Psoas muscle (tissue), 8 donors: ENCODE measurements at regions of chr17 and their contacts with region 1.

Region 1: DNA sequence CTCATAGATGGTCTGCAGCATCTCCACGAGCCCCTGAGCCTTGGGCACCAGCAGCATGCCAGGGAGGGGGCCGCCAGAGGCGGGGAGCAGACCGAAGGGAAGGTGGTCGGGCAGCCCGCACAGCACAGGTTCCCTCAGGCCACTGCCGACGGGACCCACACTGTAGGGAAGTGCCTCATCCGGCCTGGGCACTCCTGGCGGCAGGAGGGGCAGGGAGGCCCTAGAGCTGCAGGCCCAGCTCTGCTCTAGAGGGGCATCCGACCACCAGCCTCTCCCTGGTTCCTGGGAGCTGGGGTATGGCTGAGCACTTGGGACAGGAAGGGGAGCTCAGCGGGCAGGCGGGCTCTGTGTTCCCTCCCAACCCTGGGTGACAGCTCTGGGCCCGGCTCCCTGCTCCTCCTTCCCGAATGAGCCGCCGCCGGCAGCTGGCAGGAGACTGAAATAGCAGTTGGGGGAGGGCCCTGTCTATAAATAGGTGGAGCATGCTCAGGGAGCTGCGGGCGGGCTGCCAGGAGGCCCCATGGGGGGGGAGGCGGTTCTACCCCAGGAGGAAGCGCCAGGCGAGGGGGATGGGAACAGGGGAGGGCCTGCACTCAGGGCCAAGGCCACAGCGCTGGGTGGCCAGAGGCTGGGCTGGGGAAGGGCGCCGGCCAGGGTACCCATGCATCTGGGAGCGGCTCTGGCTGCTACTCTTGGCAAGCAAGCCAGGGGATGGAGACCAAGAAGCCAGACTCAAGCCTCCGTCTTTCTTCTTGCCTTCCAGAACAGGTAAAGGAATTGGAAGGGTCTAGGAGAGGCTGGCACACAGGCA is 12.4 kb downstream of the HDAC5 start:
- DNase-seq: peak; percentile 98 to 100
- ATAC-seq: peak; percentile 73 to 80 (median 78)
- H3K4me3 ChIP-seq: peak overlapping the region; percentile 72
- H3K27ac ChIP-seq: peak overlapping the region; percentile 96
- H3K4me1 ChIP-seq: peaks cover 98% of the 10 kb centered on the region
- H3K27me3 ChIP-seq: no peaks in the 10 kb centered on the region
- CTCF ChIP-seq: no peak

Region 2: DNA sequence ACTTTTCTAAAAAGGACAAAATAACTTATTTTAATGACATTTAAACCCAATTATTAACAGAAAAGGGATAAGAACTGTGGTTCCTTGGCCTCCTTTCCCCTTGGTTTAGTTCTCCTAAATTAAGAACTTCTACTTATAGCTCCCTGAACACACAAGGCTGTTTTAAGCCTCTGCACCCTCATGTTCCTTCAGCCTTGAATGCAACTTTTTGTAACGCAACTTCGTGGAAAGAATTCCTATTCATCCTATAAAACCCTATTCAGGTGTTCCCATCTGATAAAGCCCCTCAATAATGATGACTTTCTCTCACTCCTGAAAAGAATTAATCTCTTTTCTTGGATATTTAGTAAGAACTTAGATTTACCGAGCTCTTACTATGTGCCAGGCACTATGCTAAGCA is 1729.1 kb before region 1 on chr17:
- intact Hi-C with region 1: loop called in 1 of 2 experiments (anchors 5 kb)
- DNase-seq: no peak
- ATAC-seq: peak in 3 of 4 donors; percentile 59 to 89 (median 81)
- H3K4me3 ChIP-seq: no peak overlapping the region
- H3K27ac ChIP-seq: peak overlapping the region; percentile 66
- H3K4me1 ChIP-seq: peaks cover 68% of the 10 kb centered on the region
- H3K27me3 ChIP-seq: no peaks in the 10 kb centered on the region
- CTCF ChIP-seq: no peak

Region 3: GRCh38 chr17:44014437-44015172 is 96.4 kb before region 1 on chr17 and contains the start of gene TMEM101:
- intact Hi-C with region 1: loop called in 1 of 2 experiments (anchors 10 kb)
- DNase-seq: peak; percentile 91 to 95
- ATAC-seq: peak; percentile 93 to 98 (median 96)
- H3K4me3 ChIP-seq: peak within 1 kb of the TSS; percentile 95
- H3K27ac ChIP-seq: peak within 1 kb of the TSS; percentile 82
- H3K4me1 ChIP-seq: peaks cover 4% of the 10 kb centered on the region
- H3K27me3 ChIP-seq: no peaks in the 10 kb centered on the region
- CTCF ChIP-seq: no peak
- total RNA-seq, gene TMEM101: 13.2 to 25.4 (median 18.3) TPM

Region 4: DNA sequence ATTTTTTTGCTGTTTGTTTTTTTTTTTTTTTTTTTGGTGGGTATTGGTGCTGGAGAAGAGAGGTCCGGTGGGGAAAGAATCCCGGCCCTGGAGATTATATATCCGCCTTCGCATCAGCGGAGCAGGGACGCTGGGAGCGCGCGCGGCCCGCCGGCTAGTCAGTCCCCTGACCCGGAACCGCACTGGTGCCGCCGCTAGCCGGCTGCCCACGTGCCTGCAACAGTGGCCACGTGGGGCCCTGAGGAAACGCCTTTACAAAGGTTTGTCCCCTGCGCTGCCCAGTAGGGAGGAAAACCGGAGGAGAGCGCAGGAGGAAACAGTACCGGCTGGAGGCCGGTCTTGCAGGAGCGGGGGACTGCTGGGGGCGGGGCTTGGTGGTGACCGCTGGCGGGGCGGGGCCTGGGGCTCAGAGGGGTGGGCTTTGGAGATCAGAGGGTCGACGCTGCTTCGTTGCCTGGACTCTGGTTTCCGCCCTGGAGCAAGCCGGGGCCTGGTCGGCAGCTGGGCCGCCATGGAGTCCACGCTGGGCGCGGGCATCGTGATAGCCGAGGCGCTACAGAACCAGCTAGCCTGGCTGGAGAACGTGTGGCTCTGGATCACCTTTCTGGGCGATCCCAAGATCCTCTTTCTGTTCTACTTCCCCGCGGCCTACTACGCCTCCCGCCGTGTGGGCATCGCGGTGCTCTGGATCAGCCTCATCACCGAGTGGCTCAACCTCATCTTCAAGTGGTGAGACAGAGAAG is 40.4 kb before region 1 on chr17 and contains the start of gene G6PC3:
- intact Hi-C with region 1: loop called (anchors 5 kb)
- DNase-seq: peak; percentile 96 to 97
- ATAC-seq: peak; percentile 88 to 92 (median 90)
- H3K4me3 ChIP-seq: peak within 1 kb of the TSS; percentile 87
- H3K27ac ChIP-seq: peak within 1 kb of the TSS; percentile 90
- H3K4me1 ChIP-seq: peaks cover 27% of the 10 kb centered on the region
- H3K27me3 ChIP-seq: no peaks in the 10 kb centered on the region
- CTCF ChIP-seq: no peak
- total RNA-seq, gene G6PC3: 27.7 to 43.3 (median 37.6) TPM